ENCODE measurements at regions of chr15 and their contacts with region 1.

Region 1: DNA sequence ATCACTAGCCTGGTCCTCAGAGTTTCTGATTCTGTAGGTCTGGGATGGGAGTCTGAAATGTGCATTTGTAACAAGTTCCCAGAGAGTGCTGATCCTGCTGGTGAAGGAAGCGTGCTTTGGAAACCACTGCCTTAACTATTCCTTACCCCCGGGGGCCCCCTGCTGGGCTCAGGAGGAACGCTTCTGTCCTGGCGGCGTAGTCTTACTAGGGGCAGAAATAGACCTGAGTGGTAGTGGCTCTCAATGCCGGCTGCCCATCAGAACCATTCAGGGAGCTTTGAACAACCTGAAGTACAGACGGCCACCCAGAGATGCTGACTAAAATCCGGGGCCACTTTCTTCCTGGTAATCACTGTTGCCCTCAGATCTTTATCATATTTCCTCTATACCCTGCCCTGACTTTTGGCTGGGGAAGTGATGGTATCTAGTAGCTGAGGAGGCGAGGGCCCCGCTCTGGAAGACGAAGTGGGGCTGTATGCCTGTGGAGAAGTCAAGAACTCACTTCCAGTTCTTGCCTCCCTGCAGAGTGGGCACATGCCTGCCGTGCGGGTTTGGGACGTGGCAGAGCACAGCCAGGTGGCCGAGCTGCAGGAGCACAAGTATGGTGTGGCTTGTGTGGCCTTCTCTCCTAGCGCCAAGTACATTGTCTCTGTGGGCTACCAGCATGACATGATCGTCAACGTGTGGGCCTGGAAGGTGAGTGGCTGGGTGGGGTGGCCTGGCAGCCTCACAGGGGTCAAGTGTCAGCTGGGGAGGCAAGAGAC is 16.3 kb upstream of the JMJD7 start:
- DNase-seq: no peak
- ATAC-seq: peak; percentile 98
- H3K4me3 ChIP-seq: no peak overlapping the region
- H3K27ac ChIP-seq: no peak overlapping the region
- H3K4me1 ChIP-seq: no peaks in the 10 kb centered on the region
- H3K27me3 ChIP-seq: no peaks in the 10 kb centered on the region
- CTCF ChIP-seq: peak; percentile 90 to 94 (median 92)
- EP300 ChIP-seq: no peak
- POLR2A ChIP-seq: no peak
- RAD21 ChIP-seq: peak; percentile 98

Region 2: GRCh38 chr15:41557673-41558399 is 253.8 kb before region 1 on chr15:
- CTCF ChIA-PET with region 1: interaction called, 19 read pairs
- POLR2A ChIA-PET with region 1: no interaction called
- RAD21 ChIA-PET with region 1: interaction called, 3 read pairs
- SMC1A ChIA-PET with region 1: no interaction called
- in situ Hi-C with region 1: no loop called
- intact Hi-C with region 1: no loop called
- DNase-seq: peak; percentile 7
- ATAC-seq: peak; percentile 91
- H3K4me3 ChIP-seq: no peak overlapping the region
- H3K27ac ChIP-seq: no peak overlapping the region
- H3K4me1 ChIP-seq: peaks cover 8% of the 10 kb centered on the region
- H3K27me3 ChIP-seq: peaks cover 4 to 6% of the 10 kb centered on the region in 2 experiments; a peak in 2 of 4 replicates
- CTCF ChIP-seq: peak; percentile 70 to 83 (median 77)
- EP300 ChIP-seq: no peak
- POLR2A ChIP-seq: no peak
- RAD21 ChIP-seq: peak; percentile 79

Region 3: DNA sequence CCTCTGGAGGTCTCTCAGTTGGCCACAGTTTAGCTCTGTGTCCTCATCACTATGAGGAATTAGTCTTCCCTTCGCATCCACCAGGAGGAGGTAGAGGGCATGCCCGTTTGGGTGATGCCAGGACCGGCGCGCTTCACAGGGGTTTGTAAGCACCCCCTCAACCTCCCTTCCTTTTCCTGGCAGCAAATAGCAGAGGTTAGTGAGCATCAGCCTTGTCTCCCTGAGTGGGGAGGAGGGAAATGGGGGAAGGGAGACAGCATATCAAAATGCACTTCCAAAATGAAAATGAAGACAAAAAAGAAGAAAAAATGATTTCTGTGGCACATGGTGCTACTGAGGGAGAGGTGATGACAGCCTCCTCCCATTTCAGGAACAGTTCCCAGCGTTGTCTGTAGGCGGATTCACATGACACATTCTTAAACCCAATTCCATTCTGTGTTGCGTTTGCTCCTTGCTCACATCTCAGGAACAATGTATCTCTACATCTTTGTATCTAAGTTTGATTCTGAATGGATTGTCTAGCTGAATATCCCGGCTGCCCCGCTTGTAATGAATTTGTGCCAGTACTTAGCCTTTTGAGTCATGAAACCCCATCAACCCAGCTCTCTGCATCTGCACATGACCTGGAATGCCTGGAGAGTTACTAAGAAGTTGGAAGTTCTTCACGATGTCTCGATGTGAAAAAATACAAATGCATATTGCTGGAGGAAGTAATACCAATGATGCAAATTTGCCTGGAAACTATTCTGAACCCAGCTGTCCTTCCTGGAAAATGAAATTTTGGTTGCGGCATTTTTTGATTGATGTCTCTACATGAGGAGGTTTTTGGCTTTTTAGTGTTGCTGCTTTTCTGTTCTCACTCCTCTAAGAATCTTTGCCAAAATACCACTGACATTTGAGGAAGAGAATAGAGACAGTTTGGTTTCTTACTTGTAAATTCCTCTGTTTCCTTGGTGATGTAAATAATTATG is 207.4 kb before region 1 on chr15:
- CTCF ChIA-PET with region 1: interaction called, 41 read pairs
- POLR2A ChIA-PET with region 1: no interaction called
- RAD21 ChIA-PET with region 1: interaction called, 6 read pairs
- SMC1A ChIA-PET with region 1: interaction called, 10 read pairs
- in situ Hi-C with region 1: no loop called
- intact Hi-C with region 1: loop called (anchors 5 kb)
- DNase-seq: no peak
- ATAC-seq: peak; percentile 97
- H3K4me3 ChIP-seq: no peak overlapping the region
- H3K27ac ChIP-seq: no peak overlapping the region
- H3K4me1 ChIP-seq: no peaks in the 10 kb centered on the region
- H3K27me3 ChIP-seq: no peaks in the 10 kb centered on the region
- CTCF ChIP-seq: peak; percentile 68 to 77 (median 75)
- EP300 ChIP-seq: no peak
- POLR2A ChIP-seq: no peak
- RAD21 ChIP-seq: peak; percentile 64

Region 4: GRCh38 chr15:41695750-41696426 is 115.7 kb before region 1 on chr15:
- CTCF ChIA-PET with region 1: interaction called, 9 read pairs
- POLR2A ChIA-PET with region 1: interaction called, 4 read pairs
- RAD21 ChIA-PET with region 1: interaction called, 10 read pairs
- SMC1A ChIA-PET with region 1: no interaction called
- in situ Hi-C with region 1: no loop called
- intact Hi-C with region 1: loop called (anchors 10 kb)
- DNase-seq: peak; percentile 39
- ATAC-seq: peak; percentile 97
- H3K4me3 ChIP-seq: no peak overlapping the region
- H3K27ac ChIP-seq: no peak overlapping the region
- H3K4me1 ChIP-seq: peaks cover 6% of the 10 kb centered on the region; the same call in 1 of the 2 replicates
- H3K27me3 ChIP-seq: no peaks in the 10 kb centered on the region
- CTCF ChIP-seq: peak; percentile 39 to 63 (median 52); a peak in 5 of 6 replicates
- EP300 ChIP-seq: no peak
- POLR2A ChIP-seq: no peak
- RAD21 ChIP-seq: peak; percentile 57

Region 5: GRCh38 chr15:41779662-41780157 is 31.9 kb before region 1 on chr15:
- CTCF ChIA-PET with region 1: interaction called, 365 read pairs
- POLR2A ChIA-PET with region 1: interaction called, 28 read pairs
- RAD21 ChIA-PET with region 1: interaction called, 305 read pairs
- SMC1A ChIA-PET with region 1: interaction called, 268 read pairs
- in situ Hi-C with region 1: loop called (anchors 5 kb)
- intact Hi-C with region 1: no loop called
- DNase-seq: no peak
- ATAC-seq: no peak; the same call in 2 of the 3 replicates
- H3K4me3 ChIP-seq: peak overlapping the region; percentile 47; the same call in 1 of the 2 replicates
- H3K27ac ChIP-seq: peak overlapping the region; percentile 7; the same call in 1 of the 2 replicates
- H3K4me1 ChIP-seq: peaks cover 17% of the 10 kb centered on the region
- H3K27me3 ChIP-seq: no peaks in the 10 kb centered on the region
- CTCF ChIP-seq: no peak
- EP300 ChIP-seq: no peak
- POLR2A ChIP-seq: no peak
- RAD21 ChIP-seq: no peak

Region 6: DNA sequence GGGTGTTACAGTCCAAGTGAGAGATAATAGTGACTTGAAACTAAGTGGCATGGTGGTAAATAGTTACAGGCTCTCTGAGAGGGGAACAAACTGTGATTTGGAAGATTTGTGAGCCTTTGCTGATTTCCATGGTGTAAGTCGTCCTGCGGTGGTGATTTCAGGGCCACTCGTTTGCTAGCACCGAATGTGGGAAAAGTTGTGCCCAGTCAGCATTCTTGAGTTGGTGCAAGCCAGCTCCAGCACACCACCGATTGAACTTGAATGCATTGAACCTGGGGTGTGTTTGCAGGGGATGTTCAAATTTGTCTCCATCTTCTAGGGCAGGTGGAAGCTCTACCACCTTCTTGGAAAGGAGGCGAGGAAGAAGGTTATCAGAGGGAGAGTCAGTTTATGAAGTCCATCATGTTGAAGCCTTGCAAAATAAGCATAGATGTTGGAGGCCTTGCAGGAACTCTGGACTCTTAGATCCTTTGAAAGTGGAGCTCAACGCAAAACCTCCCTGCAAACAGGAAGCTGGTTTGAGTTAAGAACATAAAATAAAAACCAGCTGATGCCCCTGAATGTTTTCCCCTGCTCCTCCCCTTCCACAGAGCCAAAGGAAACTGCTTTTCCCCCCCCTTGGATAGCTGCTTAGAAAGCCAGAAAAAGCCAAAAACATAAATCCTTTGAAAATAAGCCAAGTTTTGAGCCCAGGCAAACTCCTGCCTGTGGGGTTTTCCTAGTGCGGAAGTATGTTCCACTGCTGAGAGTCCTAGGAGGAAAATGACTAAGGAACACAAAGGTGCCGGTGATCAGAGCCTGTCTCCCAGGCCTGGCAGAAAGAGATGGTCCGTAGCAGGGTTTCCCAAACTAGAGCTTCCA is 15.4 kb before region 1 on chr15:
- CTCF ChIA-PET with region 1: interaction called, 27 read pairs
- POLR2A ChIA-PET with region 1: interaction called, 7 read pairs
- RAD21 ChIA-PET with region 1: interaction called, 7 read pairs
- SMC1A ChIA-PET with region 1: interaction called, 7 read pairs
- in situ Hi-C with region 1: no loop called
- intact Hi-C with region 1: no loop called
- DNase-seq: no peak
- ATAC-seq: no peak
- H3K4me3 ChIP-seq: no peak overlapping the region
- H3K27ac ChIP-seq: 0 out of 2 replicates have a peak overlapping the region, but pooled peaks have one; percentile 0
- H3K4me1 ChIP-seq: peaks cover 32% of the 10 kb centered on the region
- H3K27me3 ChIP-seq: no peaks in the 10 kb centered on the region
- CTCF ChIP-seq: no peak
- EP300 ChIP-seq: no peak
- POLR2A ChIP-seq: no peak
- RAD21 ChIP-seq: no peak

Measured in GM12878 (cell line).